Heart left ventricle (tissue), 16 donors: ENCODE measurements at regions of chr16 and their contacts with region 1.

Region 1: GRCh38 chr16:70737377-70738082 is 51.7 kb upstream of the MTSS2 start:
- DNase-seq: peak; percentile 77 to 86 (median 82)
- ATAC-seq: peak; percentile 68 to 85 (median 82)
- H3K4me3 ChIP-seq: peak overlapping the region in 1 of 12 donors; percentile 30
- H3K27ac ChIP-seq: peak overlapping the region; percentile 78 to 96 (median 84)
- H3K4me1 ChIP-seq: peaks cover 5 to 64% (median 47%) of the 10 kb centered on the region in 12 donors
- H3K27me3 ChIP-seq: no peaks in the 10 kb centered on the region
- CTCF ChIP-seq: peak in 1 of 12 donors; percentile 11
- POLR2A ChIP-seq: peak in 1 of 2 donors; percentile 38

Region 2: DNA sequence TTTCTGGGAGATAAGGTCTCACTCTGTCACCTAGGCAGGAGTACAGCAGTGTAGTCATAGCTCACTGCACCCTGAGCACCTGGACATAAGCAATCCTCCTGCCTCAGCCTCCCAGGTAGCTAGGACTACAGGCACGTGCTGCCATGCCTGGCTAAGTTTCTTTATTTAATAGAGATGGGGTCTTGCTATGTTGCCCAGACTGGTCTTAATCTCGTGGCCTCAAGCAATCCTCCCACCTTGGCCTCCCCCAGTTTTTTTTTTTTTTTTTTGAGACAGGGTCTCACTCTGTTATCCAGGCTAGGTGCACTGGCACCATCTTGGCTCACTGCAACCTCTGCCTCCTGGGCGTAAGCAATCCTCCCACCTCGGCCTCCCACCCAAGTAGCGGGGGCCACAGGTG is 417.4 kb before region 1 on chr16:
- intact Hi-C with region 1: no loop called
- DNase-seq: no peak
- ATAC-seq: no peak
- H3K4me3 ChIP-seq: no peak overlapping the region
- H3K27ac ChIP-seq: no peak overlapping the region
- H3K4me1 ChIP-seq: no peaks in the 10 kb centered on the region
- H3K27me3 ChIP-seq: no peaks in the 10 kb centered on the region
- CTCF ChIP-seq: no peak
- POLR2A ChIP-seq: no peak

Region 3: GRCh38 chr16:70490261-70490803 is 247.2 kb before region 1 on chr16:
- intact Hi-C with region 1: no loop called
- DNase-seq: peak in 1 of 5 donors; percentile 42
- ATAC-seq: peak in 1 of 4 donors; percentile 62
- H3K4me3 ChIP-seq: no peak overlapping the region
- H3K27ac ChIP-seq: no peak overlapping the region
- H3K4me1 ChIP-seq: peaks cover 0 to 14% (median 0%) of the 10 kb centered on the region in 12 donors
- H3K27me3 ChIP-seq: no peaks in the 10 kb centered on the region
- CTCF ChIP-seq: no peak
- POLR2A ChIP-seq: no peak

Region 4: DNA sequence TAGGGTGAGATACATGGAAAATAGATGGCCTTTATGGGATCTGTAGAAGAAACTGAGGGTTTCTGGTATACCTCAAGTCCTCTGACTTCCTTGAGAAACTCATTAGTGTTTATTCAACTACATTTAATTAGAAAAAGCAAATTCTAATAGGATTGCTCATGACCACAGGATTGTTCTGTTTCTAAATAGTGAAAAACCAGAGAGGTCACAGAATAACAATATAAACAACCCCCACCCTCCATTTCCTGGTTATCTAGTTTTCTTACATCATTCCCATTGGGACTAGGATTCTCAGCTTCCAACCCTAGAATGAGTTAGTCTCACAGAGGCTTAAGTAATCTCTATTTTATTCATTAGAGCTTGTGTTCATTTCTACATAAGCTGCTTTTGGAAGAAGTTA is 183.9 kb before region 1 on chr16:
- intact Hi-C with region 1: no loop called
- DNase-seq: no peak
- ATAC-seq: peak in 2 of 4 donors; percentile 51 to 54
- H3K4me3 ChIP-seq: no peak overlapping the region
- H3K27ac ChIP-seq: peak overlapping the region in 6 of 12 donors; percentile 1 to 51 (median 22)
- H3K4me1 ChIP-seq: peaks cover 0 to 27% (median 0%) of the 10 kb centered on the region in 12 donors
- H3K27me3 ChIP-seq: no peaks in the 10 kb centered on the region
- CTCF ChIP-seq: no peak
- POLR2A ChIP-seq: no peak

Region 5: GRCh38 chr16:70679666-70680494 is 57.6 kb before region 1 on chr16:
- intact Hi-C with region 1: loop called (anchors 1 to 5 kb)
- DNase-seq: peak in 3 of 5 donors; percentile 28 to 71 (median 38)
- ATAC-seq: peak in 2 of 4 donors; percentile 21 to 54
- H3K4me3 ChIP-seq: peak overlapping the region in 2 of 12 donors; percentile 7
- H3K27ac ChIP-seq: peak overlapping the region in 6 of 12 donors; percentile 42 to 92 (median 46)
- H3K4me1 ChIP-seq: peaks cover 0 to 70% (median 42%) of the 10 kb centered on the region in 12 donors
- H3K27me3 ChIP-seq: peaks cover 0 to 4% (median 0%) of the 10 kb centered on the region in 9 donors
- CTCF ChIP-seq: peak in 11 of 12 donors; percentile 26 to 78 (median 57)
- POLR2A ChIP-seq: no peak

Region 6: GRCh38 chr16:70685938-70686375 is 51.6 kb before region 1 on chr16 and contains the start of gene MTSS2:
- intact Hi-C with region 1: loop called (anchors 1 to 5 kb)
- DNase-seq: peak; percentile 87 to 90 (median 90)
- ATAC-seq: peak; percentile 32 to 75 (median 71)
- H3K4me3 ChIP-seq: peak within 1 kb of the TSS; percentile 24 to 96 (median 73)
- H3K27ac ChIP-seq: peak within 1 kb of the TSS; percentile 43 to 96 (median 84)
- H3K4me1 ChIP-seq: peaks cover 6 to 96% (median 73%) of the 10 kb centered on the region in 12 donors
- H3K27me3 ChIP-seq: peaks cover 0 to 5% (median 0%) of the 10 kb centered on the region in 9 donors
- CTCF ChIP-seq: no peak
- POLR2A ChIP-seq: peak in 1 of 2 donors; percentile 51
- total RNA-seq, gene MTSS2: 51.9 to 90.9 (median 72.2) TPM

Region 7: GRCh38 chr16:70703041-70703834 is 34.3 kb before region 1 on chr16:
- intact Hi-C with region 1: loop called in 2 of 10 experiments (anchors 5 kb)
- DNase-seq: peak in 3 of 5 donors; percentile 63 to 78 (median 76)
- ATAC-seq: peak; percentile 59 to 83 (median 74)
- H3K4me3 ChIP-seq: no peak overlapping the region
- H3K27ac ChIP-seq: peak overlapping the region; percentile 51 to 96 (median 76)
- H3K4me1 ChIP-seq: peaks cover 0 to 74% (median 38%) of the 10 kb centered on the region in 12 donors
- H3K27me3 ChIP-seq: no peaks in the 10 kb centered on the region
- CTCF ChIP-seq: peak in 8 of 12 donors; percentile 6 to 49 (median 25)
- POLR2A ChIP-seq: no peak